Activated naive CD4-positive, alpha-beta T cell treated with anti-CD3 and anti-CD28 coated beads, Interleukin-2, amount 10 ng/mL, durations not matched to agents 7 days and 5 days (primary cell): ENCODE measurements at regions of chr7 and their contacts with region 1.

Region 1: GRCh38 chr7:140003913-140004382 is 58.8 kb downstream of the PARP12 start:
- DNase-seq: peak; percentile 46
- H3K4me3 Mint-ChIP-seq: no peak overlapping the region
- H3K27ac Mint-ChIP-seq: no peak overlapping the region
- H3K4me1 Mint-ChIP-seq: no peaks in the 10 kb centered on the region
- H3K27me3 Mint-ChIP-seq: no peaks in the 10 kb centered on the region

Region 2: DNA sequence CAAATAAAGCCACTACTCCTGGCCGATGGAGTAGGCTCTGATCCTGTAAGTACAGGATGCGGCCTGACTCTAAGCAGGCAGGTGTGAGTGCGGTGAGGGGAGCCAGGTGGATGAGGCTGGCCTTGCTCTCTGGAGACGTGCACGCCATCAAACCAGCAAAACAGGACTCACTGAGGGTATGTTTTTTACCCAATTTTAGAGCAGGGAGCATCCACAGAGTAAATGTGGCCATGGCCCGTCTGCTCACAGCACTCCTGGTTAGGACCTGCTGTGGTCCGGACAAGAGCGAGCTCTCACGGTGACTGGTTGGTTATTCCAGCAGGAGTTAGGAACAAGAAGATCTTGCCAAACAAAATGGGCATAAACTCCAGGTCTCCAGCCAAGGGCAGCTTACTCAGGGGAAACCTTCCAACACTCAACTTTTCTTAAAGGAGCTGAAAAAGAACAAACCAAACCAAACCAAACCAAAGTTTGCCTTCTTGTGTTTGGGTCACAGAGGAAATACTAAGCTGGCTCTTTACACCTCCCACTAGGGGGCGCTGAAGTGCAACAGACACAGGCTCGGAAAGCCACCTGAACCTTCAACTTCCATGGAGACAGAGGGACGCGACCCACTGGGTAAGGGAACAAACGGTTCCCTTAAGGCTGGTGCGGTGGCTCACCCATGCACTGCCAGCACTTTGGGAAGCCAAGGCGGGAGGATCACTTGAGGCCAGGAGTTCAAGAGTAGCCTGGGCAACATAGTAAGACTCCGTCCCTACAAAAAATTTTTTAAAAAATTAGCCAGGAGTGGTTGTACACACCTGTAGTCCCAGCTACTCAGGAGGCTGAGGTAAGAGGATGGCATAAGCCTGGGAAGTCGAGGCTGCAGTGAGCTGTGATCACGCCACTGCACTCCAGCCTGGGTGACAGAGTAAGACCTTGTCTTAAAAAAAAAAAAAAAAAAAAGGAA is 358.1 kb before region 1 on chr7:
- CTCF ChIA-PET with region 1: interaction called, 131 read pairs
- DNase-seq: peak; percentile 89
- H3K4me3 Mint-ChIP-seq: no peak overlapping the region
- H3K27ac Mint-ChIP-seq: no peak overlapping the region
- H3K4me1 Mint-ChIP-seq: peaks cover 75% of the 10 kb centered on the region
- H3K27me3 Mint-ChIP-seq: no peaks in the 10 kb centered on the region

Region 3: GRCh38 chr7:139981511-139981895 is 22.4 kb before region 1 on chr7:
- CTCF ChIA-PET with region 1: no interaction called
- DNase-seq: no peak
- H3K4me3 Mint-ChIP-seq: no peak overlapping the region
- H3K27ac Mint-ChIP-seq: peak overlapping the region; percentile 50
- H3K4me1 Mint-ChIP-seq: peaks cover 21% of the 10 kb centered on the region
- H3K27me3 Mint-ChIP-seq: peaks cover 28% of the 10 kb centered on the region

Region 4: DNA sequence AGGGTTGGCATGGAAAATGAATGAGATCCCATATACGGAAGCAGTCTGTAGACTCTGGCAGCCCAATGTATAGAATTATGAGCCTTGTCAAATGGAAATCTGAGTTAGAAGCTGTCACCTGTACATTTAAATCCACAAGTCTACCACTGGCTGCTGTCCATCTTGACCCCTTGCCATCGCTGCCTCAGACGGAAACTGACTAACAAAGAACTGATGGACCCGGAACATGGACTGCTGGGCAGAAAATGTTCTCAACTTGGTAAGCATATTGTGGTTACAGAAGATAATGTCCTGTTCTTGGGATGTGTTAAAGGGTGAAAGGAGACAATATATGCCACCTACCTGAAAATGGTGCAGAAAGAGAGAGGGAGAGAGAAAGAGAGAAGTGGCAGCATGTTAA is 21.3 kb after region 1 on chr7:
- CTCF ChIA-PET with region 1: no interaction called
- DNase-seq: no peak
- H3K4me3 Mint-ChIP-seq: no peak overlapping the region
- H3K27ac Mint-ChIP-seq: no peak overlapping the region
- H3K4me1 Mint-ChIP-seq: peaks cover 6% of the 10 kb centered on the region
- H3K27me3 Mint-ChIP-seq: no peaks in the 10 kb centered on the region

Region 5: DNA sequence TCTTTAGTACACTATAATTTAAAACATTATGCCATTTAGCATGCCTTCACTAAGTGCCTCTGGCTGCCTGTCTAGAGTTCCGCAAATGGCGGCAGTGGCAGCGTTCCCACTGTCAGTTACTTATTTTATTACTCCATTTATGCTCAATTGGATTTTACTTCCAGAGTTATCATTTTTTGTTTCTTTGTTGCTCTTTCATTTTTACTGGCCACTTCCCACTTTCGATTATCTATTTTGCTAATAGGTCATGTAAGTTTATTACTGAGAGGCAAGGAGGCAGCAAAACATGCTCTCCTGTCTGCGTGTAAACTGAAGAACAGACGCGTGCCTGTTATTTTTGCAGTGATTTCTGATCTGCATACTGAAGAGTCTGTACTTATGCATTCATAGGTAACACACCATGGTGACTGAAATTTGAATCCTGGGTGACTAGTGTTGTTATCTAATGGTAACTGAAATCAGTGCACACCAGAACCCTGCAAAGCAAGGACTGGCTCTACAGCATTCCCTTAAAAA is 149.8 kb after region 1 on chr7:
- CTCF ChIA-PET with region 1: no interaction called
- DNase-seq: no peak
- H3K4me3 Mint-ChIP-seq: no peak overlapping the region
- H3K27ac Mint-ChIP-seq: no peak overlapping the region
- H3K4me1 Mint-ChIP-seq: peaks cover 25% of the 10 kb centered on the region
- H3K27me3 Mint-ChIP-seq: no peaks in the 10 kb centered on the region

Region 6: GRCh38 chr7:140326116-140326928 is 322.4 kb after region 1 on chr7:
- CTCF ChIA-PET with region 1: interaction called, 18 read pairs
- DNase-seq: peak; percentile 70
- H3K4me3 Mint-ChIP-seq: no peak overlapping the region
- H3K27ac Mint-ChIP-seq: no peak overlapping the region
- H3K4me1 Mint-ChIP-seq: no peaks in the 10 kb centered on the region
- H3K27me3 Mint-ChIP-seq: no peaks in the 10 kb centered on the region